ENCODE measurements at regions of chr15 and their contacts with region 1.

Region 1: GRCh38 chr15:35674873-35675781 is 129.2 kb upstream of the DPH6 start:
- DNase-seq: peak; percentile 62
- H3K4me3 ChIP-seq: no peak overlapping the region
- H3K27ac ChIP-seq: no peak overlapping the region
- H3K4me1 ChIP-seq: peaks cover 46% of the 10 kb centered on the region
- H3K27me3 ChIP-seq: no peaks in the 10 kb centered on the region
- CTCF ChIP-seq: no peak
- POLR2A ChIP-seq: no peak

Region 2: DNA sequence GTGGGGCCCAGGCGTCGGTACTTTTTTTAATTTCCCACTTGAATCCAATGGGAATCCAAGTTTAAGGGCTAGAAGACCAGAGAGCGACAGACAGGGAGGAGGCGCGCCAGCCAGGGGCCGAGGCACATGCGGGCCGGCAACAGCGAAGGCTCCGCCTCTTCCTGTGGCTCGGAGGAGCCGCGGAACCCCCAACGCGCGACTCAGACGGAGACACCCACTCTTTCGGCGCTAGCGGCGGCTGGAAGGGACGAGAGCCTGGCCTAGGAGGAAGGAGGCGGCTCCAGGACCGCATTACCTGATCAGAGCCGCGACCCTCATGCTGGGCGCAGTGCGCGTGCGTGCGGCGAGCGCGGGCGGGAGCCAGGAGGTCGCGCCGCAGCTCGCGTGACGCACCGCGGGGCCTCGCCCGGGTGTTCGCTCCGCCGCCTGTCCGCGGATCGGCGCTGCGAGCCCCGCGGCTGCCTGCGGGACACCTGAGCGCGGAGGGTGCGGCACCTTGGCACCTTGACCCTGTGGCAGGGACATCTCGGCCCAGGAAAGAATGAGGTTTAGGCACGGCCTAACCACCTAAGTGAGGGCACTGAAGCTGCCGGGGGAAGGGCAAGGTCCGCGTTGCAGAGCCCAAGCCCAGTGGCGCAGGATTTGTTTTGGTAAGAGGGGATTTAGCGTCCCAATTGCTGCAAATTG is 129.2 kb before region 1 on chr15 and contains the start of gene DPH6:
- CTCF ChIA-PET with region 1: no interaction called
- POLR2A ChIA-PET with region 1: no interaction called
- dilution Hi-C with region 1: no loop called
- intact Hi-C with region 1: loop called (anchors 1 kb)
- DNase-seq: peak; percentile 91
- H3K4me3 ChIP-seq: peak within 1 kb of the TSS; percentile 13 to 60 (median 40)
- H3K27ac ChIP-seq: peak within 1 kb of the TSS; percentile 96
- H3K4me1 ChIP-seq: peaks cover 10% of the 10 kb centered on the region
- H3K27me3 ChIP-seq: no peaks in the 10 kb centered on the region
- CTCF ChIP-seq: no peak
- POLR2A ChIP-seq: peak; percentile 81
- total RNA-seq, gene DPH6: 10.1 and 12.4 TPM in 2 replicates

Region 3: GRCh38 chr15:35618260-35619188 is 56.6 kb before region 1 on chr15:
- CTCF ChIA-PET with region 1: no interaction called
- POLR2A ChIA-PET with region 1: no interaction called
- dilution Hi-C with region 1: no loop called
- intact Hi-C with region 1: no loop called
- DNase-seq: peak; percentile 57
- H3K4me3 ChIP-seq: no peak overlapping the region
- H3K27ac ChIP-seq: no peak overlapping the region
- H3K4me1 ChIP-seq: peaks cover 5% of the 10 kb centered on the region
- H3K27me3 ChIP-seq: no peaks in the 10 kb centered on the region
- CTCF ChIP-seq: no peak
- POLR2A ChIP-seq: no peak

Region 4: DNA sequence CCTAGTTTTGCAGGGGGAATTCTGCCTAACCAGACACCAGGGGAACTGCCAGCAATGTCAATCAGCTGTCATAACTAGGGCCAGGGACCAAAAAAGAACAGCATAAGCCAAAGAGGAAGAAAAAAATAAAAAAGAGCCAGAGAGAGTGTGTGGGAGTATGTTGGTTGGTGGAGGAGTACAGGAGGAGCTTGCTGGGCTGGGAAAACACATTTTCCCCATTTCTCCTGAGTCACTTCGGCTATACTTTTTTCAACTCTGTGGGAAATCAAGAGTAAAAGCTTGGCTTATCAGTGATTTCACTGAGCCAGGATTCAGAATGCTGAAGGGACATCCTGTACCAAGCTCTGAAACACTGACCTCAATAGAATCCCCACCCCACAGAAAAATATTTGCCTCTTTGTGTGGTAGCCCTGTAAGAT is 15.6 kb after region 1 on chr15:
- CTCF ChIA-PET with region 1: interaction called, 6 read pairs
- POLR2A ChIA-PET with region 1: no interaction called
- dilution Hi-C with region 1: no loop called
- intact Hi-C with region 1: loop called (anchors 1 kb)
- DNase-seq: peak; percentile 97
- H3K4me3 ChIP-seq: no peak overlapping the region
- H3K27ac ChIP-seq: peak overlapping the region; percentile 94
- H3K4me1 ChIP-seq: peaks cover 39% of the 10 kb centered on the region
- H3K27me3 ChIP-seq: no peaks in the 10 kb centered on the region
- CTCF ChIP-seq: no peak
- POLR2A ChIP-seq: peak; percentile 24

Region 5: DNA sequence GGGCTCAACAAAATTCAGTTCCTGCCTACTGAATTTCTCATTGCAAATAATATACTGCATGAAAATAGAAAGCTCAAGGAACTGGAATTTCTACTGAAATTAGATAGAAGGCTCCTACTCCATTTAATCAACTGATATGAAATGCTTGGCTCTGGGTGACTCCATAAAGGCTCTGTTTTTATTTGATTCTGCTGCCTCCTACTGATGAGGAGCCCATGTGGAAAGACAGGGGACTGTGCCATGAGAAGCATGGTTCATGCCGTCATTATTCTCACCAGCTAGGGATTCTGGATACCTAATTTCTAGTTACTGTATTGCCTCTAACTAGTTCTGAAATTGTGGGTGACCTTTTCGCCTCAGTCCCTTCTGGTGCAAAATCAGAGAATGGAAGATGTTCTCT is 237.1 kb after region 1 on chr15:
- CTCF ChIA-PET with region 1: no interaction called
- POLR2A ChIA-PET with region 1: no interaction called
- dilution Hi-C with region 1: no loop called
- intact Hi-C with region 1: no loop called
- DNase-seq: peak; percentile 31
- H3K4me3 ChIP-seq: no peak overlapping the region
- H3K27ac ChIP-seq: no peak overlapping the region
- H3K4me1 ChIP-seq: no peaks in the 10 kb centered on the region
- H3K27me3 ChIP-seq: peaks cover 0 to 2% of the 10 kb centered on the region in 2 experiments
- CTCF ChIP-seq: peak in 1 of 2 donors; percentile 8
- POLR2A ChIP-seq: no peak

Measured in endothelial cell of umbilical vein (primary cell).